ENCODE measurements at regions of chr2 and their contacts with region 1.

Region 1: GRCh38 chr2:62456721-62457539 is 49.1 kb downstream of the TMEM17 start:
- DNase-seq: no peak
- ATAC-seq: peak; percentile 94
- H3K4me3 ChIP-seq: peak overlapping the region; percentile 37 to 58
- H3K27ac ChIP-seq: peak overlapping the region; percentile 74
- H3K4me1 ChIP-seq: peaks cover 22 to 49% of the 10 kb centered on the region in 2 experiments
- H3K27me3 ChIP-seq: no peaks in the 10 kb centered on the region
- CTCF ChIP-seq: peak in 2 of 3 experiments; percentile 79 to 88; a peak in 4 of 6 replicates
- POLR2A ChIP-seq: no peak
- RAD21 ChIP-seq: no peak

Region 2: GRCh38 chr2:62505750-62506420 is 49.0 kb after region 1 on chr2 and contains the start of gene TMEM17:
- CTCF ChIA-PET with region 1: no interaction called
- POLR2A ChIA-PET with region 1: no interaction called
- RAD21 ChIA-PET with region 1: no interaction called
- intact Hi-C with region 1: no loop called
- DNase-seq: peak; percentile 78
- ATAC-seq: peak; percentile 89
- H3K4me3 ChIP-seq: peak within 1 kb of the TSS; percentile 46 to 73
- H3K27ac ChIP-seq: peak within 1 kb of the TSS; percentile 67
- H3K4me1 ChIP-seq: peaks cover 3 to 37% of the 10 kb centered on the region in 2 experiments; a peak in 3 of 4 replicates
- H3K27me3 ChIP-seq: no peaks in the 10 kb centered on the region
- CTCF ChIP-seq: no peak
- POLR2A ChIP-seq: peak; percentile 43
- RAD21 ChIP-seq: no peak
- total RNA-seq, gene TMEM17: 3.2 TPM

Region 3: GRCh38 chr2:62705007-62705829 is 248.3 kb after region 1 on chr2 and contains the start of gene EHBP1:
- CTCF ChIA-PET with region 1: interaction called, 4 read pairs
- POLR2A ChIA-PET with region 1: interaction called, 5 read pairs
- RAD21 ChIA-PET with region 1: no interaction called
- intact Hi-C with region 1: loop called (anchors 5 kb)
- DNase-seq: peak; percentile 100
- ATAC-seq: peak; percentile 93
- H3K4me3 ChIP-seq: peak within 1 kb of the TSS; percentile 79 to 80
- H3K27ac ChIP-seq: peak within 1 kb of the TSS; percentile 69
- H3K4me1 ChIP-seq: peaks cover 8 to 33% of the 10 kb centered on the region in 2 experiments
- H3K27me3 ChIP-seq: no peaks in the 10 kb centered on the region
- CTCF ChIP-seq: no peak
- POLR2A ChIP-seq: peak; percentile 64
- RAD21 ChIP-seq: no peak
- total RNA-seq, gene EHBP1: 89.9 TPM

Region 4: GRCh38 chr2:62774555-62775366 is 317.8 kb after region 1 on chr2:
- CTCF ChIA-PET with region 1: interaction called, 32 read pairs
- POLR2A ChIA-PET with region 1: interaction called, 3 read pairs
- RAD21 ChIA-PET with region 1: interaction called, 4 to 5 read pairs
- intact Hi-C with region 1: loop called (anchors 1 kb)
- DNase-seq: peak; percentile 49
- ATAC-seq: peak; percentile 88
- H3K4me3 ChIP-seq: no peak overlapping the region
- H3K27ac ChIP-seq: peak overlapping the region; percentile 77
- H3K4me1 ChIP-seq: peaks cover 23 to 38% of the 10 kb centered on the region in 2 experiments
- H3K27me3 ChIP-seq: no peaks in the 10 kb centered on the region
- CTCF ChIP-seq: peak; percentile 65 to 77 (median 67)
- POLR2A ChIP-seq: no peak
- RAD21 ChIP-seq: peak; percentile 82

Region 5: GRCh38 chr2:62856228-62857040 is 399.5 kb after region 1 on chr2:
- CTCF ChIA-PET with region 1: no interaction called
- POLR2A ChIA-PET with region 1: no interaction called
- RAD21 ChIA-PET with region 1: no interaction called
- intact Hi-C with region 1: no loop called
- DNase-seq: no peak
- ATAC-seq: no peak
- H3K4me3 ChIP-seq: no peak overlapping the region
- H3K27ac ChIP-seq: no peak overlapping the region
- H3K4me1 ChIP-seq: no peaks in the 10 kb centered on the region
- H3K27me3 ChIP-seq: no peaks in the 10 kb centered on the region
- CTCF ChIP-seq: no peak
- POLR2A ChIP-seq: no peak
- RAD21 ChIP-seq: no peak

Region 6: DNA sequence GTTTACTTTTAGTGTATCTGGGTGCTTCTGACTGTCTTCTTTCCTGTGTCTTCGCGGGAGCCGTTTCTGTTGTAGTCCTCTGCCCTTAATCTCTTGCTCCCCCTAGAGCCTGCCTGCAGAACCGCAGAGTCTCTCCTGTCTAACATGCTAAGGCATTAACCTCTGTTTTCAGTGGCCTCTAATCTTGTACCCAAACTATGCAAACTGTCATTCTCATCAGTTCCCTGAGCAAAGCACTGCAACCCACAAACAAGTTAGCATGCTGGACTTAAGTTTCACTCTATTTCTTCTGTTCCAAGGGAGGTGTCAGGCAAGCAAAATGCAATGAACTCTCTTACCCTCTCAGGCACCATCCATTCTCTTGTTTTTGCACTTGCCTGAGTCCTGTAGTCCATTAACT is 732.1 kb after region 1 on chr2:
- CTCF ChIA-PET with region 1: no interaction called
- POLR2A ChIA-PET with region 1: no interaction called
- RAD21 ChIA-PET with region 1: no interaction called
- intact Hi-C with region 1: loop called (anchors 10 kb)
- DNase-seq: peak; percentile 54
- ATAC-seq: peak; percentile 100
- H3K4me3 ChIP-seq: no peak overlapping the region
- H3K27ac ChIP-seq: no peak overlapping the region
- H3K4me1 ChIP-seq: no peaks in the 10 kb centered on the region
- H3K27me3 ChIP-seq: no peaks in the 10 kb centered on the region
- CTCF ChIP-seq: peak; percentile 54 to 95 (median 94); a peak in 5 of 6 replicates
- POLR2A ChIP-seq: no peak
- RAD21 ChIP-seq: peak; percentile 87

Measured in HCT116 (cell line).